ENCODE measurements at regions of chr1 and their contacts with region 1.

Region 1: GRCh38 chr1:151070474-151071276 is at the start of gene GABPB2:
- DNase-seq: peak; percentile 77 to 95 (median 82)
- ATAC-seq: peak; percentile 80
- H3K4me3 ChIP-seq: peak within 1 kb of the TSS; percentile 87
- H3K4me3 Mint-ChIP-seq: peak within 1 kb of the TSS; percentile 99
- H3K27ac ChIP-seq: peak within 1 kb of the TSS; percentile 94 to 98
- H3K27ac Mint-ChIP-seq: peak within 1 kb of the TSS; percentile 98
- H3K4me1 ChIP-seq: peaks cover 31% of the 10 kb centered on the region
- H3K4me1 Mint-ChIP-seq: peaks cover 27% of the 10 kb centered on the region
- H3K27me3 ChIP-seq: no peaks in the 10 kb centered on the region
- H3K27me3 Mint-ChIP-seq: no peaks in the 10 kb centered on the region
- CTCF ChIP-seq: peak; percentile 93
- total RNA-seq, gene GABPB2: 23.7 to 25.5 TPM

Region 2: GRCh38 chr1:151047925-151048645 is 22.6 kb before region 1 on chr1:
- CTCF ChIA-PET with region 1: interaction called, 23 read pairs
- POLR2A ChIA-PET with region 1: interaction called, 10 read pairs
- intact Hi-C with region 1: loop called in 1 of 2 experiments (anchors 2 kb)
- DNase-seq: peak; percentile 28 to 84 (median 51)
- ATAC-seq: peak; percentile 77
- H3K4me3 ChIP-seq: peak overlapping the region; percentile 84
- H3K4me3 Mint-ChIP-seq: peak overlapping the region; percentile 93
- H3K27ac ChIP-seq: peak overlapping the region; percentile 65 to 73
- H3K27ac Mint-ChIP-seq: peak overlapping the region; percentile 90
- H3K4me1 ChIP-seq: peaks cover 55% of the 10 kb centered on the region
- H3K4me1 Mint-ChIP-seq: peaks cover 78% of the 10 kb centered on the region
- H3K27me3 ChIP-seq: no peaks in the 10 kb centered on the region
- H3K27me3 Mint-ChIP-seq: no peaks in the 10 kb centered on the region
- CTCF ChIP-seq: peak; percentile 52

Region 3: GRCh38 chr1:151059078-151059907 is 11.4 kb before region 1 on chr1 and contains the start of gene CDC42SE1:
- CTCF ChIA-PET with region 1: interaction called, 60 read pairs
- POLR2A ChIA-PET with region 1: interaction called, 78 read pairs
- intact Hi-C with region 1: loop called (anchors 1 kb)
- DNase-seq: peak; percentile 71 to 94 (median 80)
- ATAC-seq: peak; percentile 76
- H3K4me3 ChIP-seq: peak within 1 kb of the TSS; percentile 64
- H3K4me3 Mint-ChIP-seq: peak within 1 kb of the TSS; percentile 97
- H3K27ac ChIP-seq: peak within 1 kb of the TSS; percentile 88 to 93
- H3K27ac Mint-ChIP-seq: peak within 1 kb of the TSS; percentile 90
- H3K4me1 ChIP-seq: peaks cover 42% of the 10 kb centered on the region
- H3K4me1 Mint-ChIP-seq: peaks cover 56% of the 10 kb centered on the region
- H3K27me3 ChIP-seq: no peaks in the 10 kb centered on the region
- H3K27me3 Mint-ChIP-seq: no peaks in the 10 kb centered on the region
- CTCF ChIP-seq: peak; percentile 81
- total RNA-seq, gene CDC42SE1: 401 to 404 TPM

Region 4: DNA sequence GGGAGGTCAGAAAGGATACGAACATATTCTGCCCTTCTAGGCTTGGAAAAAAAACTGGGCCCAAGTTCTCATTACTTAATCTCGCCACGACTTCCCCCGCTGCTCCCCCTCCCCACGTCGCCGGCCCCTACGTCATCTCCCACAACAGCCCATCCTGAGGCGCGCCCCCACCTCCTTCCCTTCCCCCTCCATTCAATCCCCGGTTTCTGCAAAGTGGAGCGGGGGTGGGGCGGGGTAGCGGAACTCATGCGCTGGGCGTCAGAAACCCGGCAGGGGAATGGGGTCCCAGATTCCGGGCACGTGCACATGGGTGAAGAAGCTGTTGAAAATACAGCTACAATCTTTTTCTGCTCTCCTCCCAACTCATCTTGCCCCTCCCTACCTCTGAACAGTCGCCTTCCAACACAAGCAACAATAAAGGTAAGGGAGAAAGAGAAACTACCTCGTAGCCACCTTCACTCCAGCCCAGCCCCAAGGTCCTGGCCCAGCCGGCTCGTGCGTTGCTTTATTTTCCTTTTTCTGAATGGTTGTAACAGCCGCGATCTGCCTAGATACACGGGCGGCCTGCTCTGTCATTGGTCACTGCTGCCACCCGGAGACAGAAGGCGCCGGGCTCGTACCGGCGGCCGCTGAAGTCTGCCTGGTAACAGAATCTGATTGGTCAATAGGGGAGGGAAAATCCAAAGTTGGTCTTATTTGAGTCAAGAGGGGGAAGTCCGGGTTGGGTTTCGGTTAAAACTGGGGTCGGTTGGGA is 276.3 kb after region 1 on chr1 and contains the start of gene RFX5:
- CTCF ChIA-PET with region 1: no interaction called
- POLR2A ChIA-PET with region 1: no interaction called
- intact Hi-C with region 1: loop called in 1 of 2 experiments (anchors 10 kb)
- DNase-seq: peak; percentile 85 to 99 (median 90)
- ATAC-seq: peak; percentile 93
- H3K4me3 ChIP-seq: peak within 1 kb of the TSS; percentile 81
- H3K4me3 Mint-ChIP-seq: peak within 1 kb of the TSS; percentile 94
- H3K27ac ChIP-seq: peak within 1 kb of the TSS; percentile 97 to 98
- H3K27ac Mint-ChIP-seq: peak within 1 kb of the TSS; percentile 94
- H3K4me1 ChIP-seq: peaks cover 33% of the 10 kb centered on the region
- H3K4me1 Mint-ChIP-seq: peaks cover 30% of the 10 kb centered on the region
- H3K27me3 ChIP-seq: no peaks in the 10 kb centered on the region
- H3K27me3 Mint-ChIP-seq: no peaks in the 10 kb centered on the region
- CTCF ChIP-seq: no peak
- total RNA-seq, gene RFX5: 62.0 to 65.7 TPM